ENCODE measurements at regions of chr12 and their contacts with region 1.

Region 1: DNA sequence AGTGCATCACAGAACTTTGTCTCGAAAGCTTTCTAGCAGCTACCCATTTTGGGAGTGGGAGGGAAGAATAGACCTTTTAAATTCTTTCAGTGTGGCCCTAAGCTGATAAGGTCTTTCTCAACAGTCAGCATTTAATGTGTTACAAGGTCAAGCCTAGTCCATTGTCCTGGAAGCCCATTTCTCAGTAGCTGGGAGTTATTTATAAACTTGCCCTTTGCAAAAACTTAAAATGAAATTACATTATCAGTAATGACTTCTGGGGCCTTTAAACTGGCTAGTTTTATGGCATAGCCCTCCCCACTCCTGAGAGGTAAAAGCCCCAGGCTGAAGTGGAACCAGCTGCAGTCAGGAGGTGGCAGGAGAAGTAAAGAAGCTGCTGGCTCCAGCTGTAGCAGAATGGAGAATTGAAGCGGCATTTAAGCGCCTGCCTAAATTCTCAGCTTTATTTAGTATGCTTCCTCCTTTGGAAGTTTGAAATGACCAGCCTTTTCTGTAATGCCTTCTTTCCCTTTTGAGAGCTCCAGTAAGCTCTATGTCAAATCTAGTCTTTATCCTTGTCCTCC is 12.4 kb downstream of the COPZ1 start:
- DNase-seq: no peak
- CTCF ChIP-seq: no peak

Region 2: DNA sequence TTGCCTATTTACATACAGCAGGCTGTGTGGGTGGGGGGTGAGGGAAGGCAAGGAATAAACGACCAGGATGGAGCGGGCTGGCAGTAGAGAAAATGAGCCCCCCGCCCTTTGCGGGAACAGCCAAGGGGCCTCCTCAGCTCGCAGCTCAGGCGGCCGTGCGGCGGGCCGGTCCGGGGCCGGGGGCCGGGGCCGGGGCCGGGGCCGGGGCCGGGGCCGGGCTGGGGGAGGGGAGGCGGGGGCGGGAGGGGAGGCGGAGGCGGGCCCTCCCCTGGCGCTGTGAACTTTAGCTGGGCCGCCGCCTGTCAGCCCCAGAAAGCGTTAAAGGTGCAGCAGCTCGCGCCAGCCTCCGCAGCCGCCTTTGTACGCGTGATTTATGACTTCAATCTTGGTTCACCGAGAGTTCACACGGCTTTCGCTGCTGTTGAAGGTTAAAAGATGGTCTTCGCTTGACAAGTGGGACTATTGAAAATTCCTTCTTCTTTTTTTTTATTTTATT is 254.9 kb before region 1 on chr12:
- CTCF ChIA-PET with region 1: no interaction called
- POLR2A ChIA-PET with region 1: no interaction called
- DNase-seq: no peak
- CTCF ChIP-seq: no peak

Region 3: GRCh38 chr12:54352022-54352531 is 14.7 kb after region 1 on chr12:
- CTCF ChIA-PET with region 1: interaction called, 46 read pairs
- POLR2A ChIA-PET with region 1: no interaction called
- DNase-seq: no peak
- CTCF ChIP-seq: no peak

Region 4: GRCh38 chr12:54359033-54359761 is 21.8 kb after region 1 on chr12:
- CTCF ChIA-PET with region 1: interaction called, 20 read pairs
- POLR2A ChIA-PET with region 1: interaction called, 4 read pairs
- DNase-seq: peak; percentile 97
- CTCF ChIP-seq: no peak

Region 5: GRCh38 chr12:54368709-54369583 is 31.6 kb after region 1 on chr12:
- CTCF ChIA-PET with region 1: interaction called, 17 read pairs
- POLR2A ChIA-PET with region 1: interaction called, 3 read pairs
- DNase-seq: peak; percentile 82
- CTCF ChIP-seq: peak; percentile 96